Psoas muscle (tissue), 8 donors: ENCODE measurements at regions of chr17 and their contacts with region 1.

Region 1: DNA sequence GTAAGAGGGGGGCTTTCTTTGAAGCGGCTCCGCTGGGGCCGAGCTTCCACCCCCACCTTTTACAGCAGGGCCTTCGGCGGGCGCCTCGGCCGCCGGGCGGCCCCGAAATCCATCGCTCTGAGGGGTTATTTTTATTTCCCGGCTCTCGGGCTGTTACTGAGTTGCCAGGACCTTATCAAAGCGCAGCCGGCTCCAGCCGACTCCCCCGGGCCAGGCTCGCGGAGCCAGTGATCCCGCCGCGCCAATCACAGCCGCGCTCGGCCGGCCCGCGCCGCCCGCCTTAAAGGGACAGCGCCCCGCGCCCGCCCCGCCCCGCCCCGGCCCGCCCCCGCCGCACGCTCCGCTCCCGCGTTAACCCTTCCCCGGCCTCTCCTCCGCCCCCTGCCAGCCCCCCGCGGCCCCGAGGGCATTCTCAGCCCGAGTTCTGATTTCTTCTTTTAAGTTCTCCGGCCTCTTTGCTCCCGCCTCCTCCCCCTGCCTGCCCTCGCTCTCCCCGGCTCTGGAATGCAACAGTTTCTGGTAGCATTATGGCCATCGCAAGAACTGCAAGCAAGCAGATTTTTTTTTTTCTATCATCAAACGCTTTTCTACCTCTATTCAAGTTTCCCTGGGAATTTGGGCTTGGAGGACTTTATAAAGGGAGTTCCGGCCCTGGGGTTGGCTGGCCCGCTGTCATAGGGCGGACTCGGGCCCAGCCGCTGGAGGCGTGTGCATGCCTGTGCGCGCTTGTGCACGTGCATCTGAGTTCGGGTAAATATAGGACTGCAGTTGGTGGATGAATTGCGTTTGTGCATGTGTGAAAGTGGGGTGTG is at the start of gene AXIN2:
- DNase-seq: peak; percentile 93 to 95
- ATAC-seq: peak; percentile 71 to 87 (median 80)
- H3K4me3 ChIP-seq: no peak within 1 kb of the TSS
- H3K27ac ChIP-seq: no peak within 1 kb of the TSS
- H3K4me1 ChIP-seq: peaks cover 34% of the 10 kb centered on the region
- H3K27me3 ChIP-seq: no peaks in the 10 kb centered on the region
- CTCF ChIP-seq: no peak
- total RNA-seq, gene AXIN2: 6.0 to 19.1 (median 10.0) TPM

Region 2: GRCh38 chr17:63653050-63653449 is 1908.5 kb before region 1 on chr17:
- intact Hi-C with region 1: no loop called
- DNase-seq: no peak
- ATAC-seq: peak in 1 of 4 donors; percentile 21
- H3K4me3 ChIP-seq: no peak overlapping the region
- H3K27ac ChIP-seq: no peak overlapping the region
- H3K4me1 ChIP-seq: no peaks in the 10 kb centered on the region
- H3K27me3 ChIP-seq: no peaks in the 10 kb centered on the region
- CTCF ChIP-seq: no peak

Region 3: DNA sequence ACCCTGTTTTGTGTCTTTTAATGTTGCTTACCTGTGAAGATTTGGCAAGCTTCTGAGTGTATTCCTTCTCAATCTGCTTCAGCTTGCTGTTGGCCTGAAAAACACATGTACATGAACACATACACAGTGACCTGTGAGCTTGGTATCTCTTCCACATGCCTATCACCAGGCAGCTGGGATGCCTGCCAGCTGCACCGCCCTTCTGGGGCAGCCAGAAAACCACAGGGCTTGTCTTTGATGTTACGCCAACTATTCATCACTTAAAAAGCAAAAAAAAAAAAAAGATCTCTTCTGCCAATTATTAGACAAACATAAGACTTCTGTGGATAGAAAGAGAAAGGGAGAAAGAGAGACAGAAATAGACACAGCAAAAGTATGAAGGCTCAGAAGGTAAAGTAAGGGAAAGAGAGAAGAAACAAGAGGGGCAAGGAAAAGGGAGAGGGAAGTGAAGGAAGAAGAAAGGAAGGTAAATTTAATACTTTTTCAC is 189.1 kb after region 1 on chr17:
- intact Hi-C with region 1: loop called in 1 of 2 experiments (anchors 10 kb)
- DNase-seq: peak; percentile 65 to 69
- ATAC-seq: peak; percentile 73 to 94 (median 88)
- H3K4me3 ChIP-seq: no peak overlapping the region
- H3K27ac ChIP-seq: peak overlapping the region; percentile 56
- H3K4me1 ChIP-seq: peaks cover 13% of the 10 kb centered on the region
- H3K27me3 ChIP-seq: no peaks in the 10 kb centered on the region
- CTCF ChIP-seq: no peak

Region 4: DNA sequence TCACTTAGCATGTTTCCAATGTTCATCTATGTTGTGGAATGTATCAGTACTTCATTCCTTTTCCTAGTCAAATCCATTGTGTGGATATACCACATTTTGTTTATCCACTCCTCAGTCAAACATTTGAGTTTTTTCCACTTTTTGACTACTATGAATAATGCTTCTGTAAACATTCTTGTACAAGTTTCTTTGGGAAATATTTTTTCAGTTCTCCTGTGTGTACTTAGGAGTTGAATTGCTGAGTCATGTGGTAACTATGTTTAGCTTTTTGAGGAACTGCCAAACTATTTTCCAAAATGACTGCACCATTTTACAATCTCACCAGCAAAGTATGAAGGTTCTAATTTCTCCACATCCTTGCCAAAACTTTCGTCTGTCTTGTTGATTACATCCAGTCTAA is 223.5 kb after region 1 on chr17:
- intact Hi-C with region 1: loop called in 1 of 2 experiments (anchors 10 kb)
- DNase-seq: no peak
- ATAC-seq: peak; percentile 58 to 73 (median 70)
- H3K4me3 ChIP-seq: no peak overlapping the region
- H3K27ac ChIP-seq: peak overlapping the region; percentile 59
- H3K4me1 ChIP-seq: peaks cover 18% of the 10 kb centered on the region
- H3K27me3 ChIP-seq: no peaks in the 10 kb centered on the region
- CTCF ChIP-seq: no peak